Mucosa of descending colon (tissue), 3 donors: ENCODE measurements at regions of chr5 and their contacts with region 1.

Region 1: GRCh38 chr5:154189819-154190594 is 526 bp upstream of the GALNT10 start:
- DNase-seq: peak; percentile 86 to 94 (median 92)
- ATAC-seq: peak; percentile 94
- H3K4me3 ChIP-seq: peak overlapping the region; percentile 67
- H3K4me1 ChIP-seq: peaks cover 11% of the 10 kb centered on the region
- CTCF ChIP-seq: peak; percentile 25

Region 2: GRCh38 chr5:154010660-154011059 is 179.3 kb before region 1 on chr5:
- intact Hi-C with region 1: no loop called
- DNase-seq: no peak
- ATAC-seq: no peak
- H3K4me3 ChIP-seq: no peak overlapping the region
- H3K4me1 ChIP-seq: no peaks in the 10 kb centered on the region
- CTCF ChIP-seq: no peak

Region 3: GRCh38 chr5:154049636-154050035 is 140.4 kb before region 1 on chr5:
- intact Hi-C with region 1: no loop called
- DNase-seq: no peak
- ATAC-seq: no peak
- H3K4me3 ChIP-seq: no peak overlapping the region
- H3K4me1 ChIP-seq: no peaks in the 10 kb centered on the region
- CTCF ChIP-seq: no peak

Region 4: DNA sequence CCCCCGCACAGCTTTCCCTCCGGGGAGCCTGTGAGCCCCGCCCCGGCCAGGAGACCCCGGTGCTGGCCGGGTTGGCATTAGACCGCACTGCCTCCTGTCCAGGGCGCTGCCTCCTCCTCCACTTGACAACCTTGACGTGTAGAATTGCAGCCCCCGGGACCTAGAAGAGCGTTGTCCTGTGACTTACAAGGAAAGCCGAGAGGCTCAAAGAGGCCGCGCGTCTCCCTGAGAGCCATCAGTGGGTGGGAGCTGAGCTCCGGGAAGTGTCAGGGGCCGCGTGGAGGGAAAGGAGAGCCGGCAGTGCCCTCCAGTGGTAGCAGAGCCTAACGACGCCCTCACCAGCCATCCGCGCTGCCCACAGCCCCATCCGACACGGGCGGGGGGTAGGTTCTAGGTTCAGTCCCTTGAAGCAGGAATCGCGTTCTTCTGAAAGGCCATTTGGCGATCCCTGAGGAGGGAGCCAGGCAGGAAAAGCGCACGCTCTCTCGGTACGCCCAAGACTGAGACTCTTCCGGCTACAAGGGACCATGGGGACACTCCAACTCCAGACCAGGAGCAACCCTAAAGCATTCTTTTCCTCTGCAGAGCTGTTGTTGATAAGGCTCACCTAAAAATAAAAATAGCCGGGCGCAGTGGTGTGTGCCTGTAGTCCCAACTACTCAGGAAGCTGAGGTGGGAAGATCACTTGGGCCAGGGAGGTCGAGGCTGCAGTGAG is 215.2 kb after region 1 on chr5:
- intact Hi-C with region 1: loop called (anchors 10 kb)
- DNase-seq: peak; percentile 79 to 82 (median 82)
- ATAC-seq: peak; percentile 97
- H3K4me3 ChIP-seq: no peak overlapping the region
- H3K4me1 ChIP-seq: peaks cover 8% of the 10 kb centered on the region
- CTCF ChIP-seq: peak; percentile 76